ENCODE measurements at regions of chr5 and their contacts with region 1.

Region 1: DNA sequence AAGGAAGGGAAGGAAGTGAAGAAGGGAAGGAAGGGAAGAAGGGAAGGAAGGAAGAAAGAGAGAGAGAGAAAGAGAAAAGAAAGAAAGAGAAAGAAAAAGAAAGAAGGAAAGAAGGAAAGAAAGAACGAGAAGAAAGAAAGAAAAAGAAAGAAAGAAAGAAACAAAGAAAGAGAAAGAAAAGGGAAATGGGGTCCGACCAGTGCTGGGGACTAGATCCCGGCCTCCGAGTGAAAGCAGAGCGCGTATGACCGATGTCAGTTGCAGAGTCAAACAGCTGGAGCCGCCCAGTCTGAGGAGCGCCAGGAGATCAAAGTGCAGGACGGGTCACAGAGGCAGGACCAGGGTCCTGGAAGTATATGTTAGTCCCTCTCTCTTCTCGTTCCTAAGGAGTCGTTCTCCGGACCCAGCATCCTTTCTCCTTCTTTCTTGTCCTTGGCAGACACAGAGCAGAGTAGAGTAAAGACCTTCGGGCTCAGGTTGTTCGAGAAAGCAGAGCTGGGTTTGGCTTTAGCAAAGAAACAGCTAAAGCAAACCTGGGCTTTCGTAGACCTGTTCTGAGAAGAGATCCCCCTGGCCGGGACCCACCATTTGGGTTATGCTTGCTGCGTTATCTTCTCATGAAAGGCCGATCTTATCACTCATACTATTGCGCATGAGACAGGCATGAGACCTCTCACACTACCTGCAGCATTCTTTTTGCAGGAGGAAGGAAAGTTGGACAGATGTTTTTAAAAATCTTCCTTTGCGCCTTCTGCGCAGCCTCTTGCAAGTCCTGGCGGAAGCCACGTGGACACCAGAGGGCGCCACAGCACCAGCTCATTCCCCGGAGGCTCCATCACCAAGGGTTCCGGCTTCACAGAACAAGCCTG is 305.2 kb upstream of the MSX2 start:
- DNase-seq: peak; percentile 96
- H3K4me3 Mint-ChIP-seq: peak overlapping the region; percentile 68
- H3K27ac Mint-ChIP-seq: peak overlapping the region; percentile 22
- H3K4me1 Mint-ChIP-seq: peaks cover 25% of the 10 kb centered on the region
- H3K27me3 Mint-ChIP-seq: no peaks in the 10 kb centered on the region
- CTCF ChIP-seq: peak; percentile 97

Region 2: DNA sequence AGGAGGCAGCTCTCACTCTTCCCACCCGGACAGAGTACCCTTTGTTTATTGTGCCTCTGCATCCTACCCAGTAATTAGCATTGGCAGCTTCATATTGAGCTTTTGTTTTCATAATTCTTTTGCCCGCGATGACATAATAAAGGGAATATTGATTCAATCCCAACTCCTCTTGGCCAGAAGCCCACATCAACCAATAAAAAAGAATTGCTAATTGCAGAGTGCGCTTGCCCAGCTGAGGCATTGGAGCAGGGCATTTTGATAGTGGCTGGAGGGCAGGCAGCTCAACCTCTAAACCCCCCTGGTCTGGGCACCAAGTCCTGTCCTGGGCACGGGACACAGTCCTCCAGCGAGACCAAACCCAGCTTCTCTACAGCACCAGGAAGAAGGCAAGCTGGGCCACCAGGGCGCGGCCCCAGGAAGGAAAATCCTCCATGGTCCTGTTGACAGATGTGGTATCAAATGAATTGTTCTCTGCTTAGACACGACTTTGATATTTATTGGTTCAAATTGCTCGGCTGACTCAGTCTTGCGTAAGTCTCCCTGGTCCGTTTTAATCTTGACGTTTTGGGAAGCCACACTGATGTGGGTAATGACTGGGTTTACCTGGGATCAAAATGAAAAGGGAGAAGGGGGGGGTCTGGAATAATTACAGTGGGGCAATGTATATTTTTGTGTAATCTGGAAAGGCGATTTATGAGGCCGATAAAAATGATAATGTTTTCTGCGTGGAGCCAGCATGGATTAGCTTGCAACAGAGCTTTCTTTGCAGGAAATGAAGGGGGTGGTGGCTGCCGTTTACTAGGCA is 84.5 kb after region 1 on chr5:
- CTCF ChIA-PET with region 1: interaction called, 14 read pairs
- intact Hi-C with region 1: no loop called
- DNase-seq: peak; percentile 82
- H3K4me3 Mint-ChIP-seq: peak overlapping the region; percentile 65
- H3K27ac Mint-ChIP-seq: peak overlapping the region; percentile 79
- H3K4me1 Mint-ChIP-seq: peaks cover 54% of the 10 kb centered on the region
- H3K27me3 Mint-ChIP-seq: no peaks in the 10 kb centered on the region
- CTCF ChIP-seq: no peak

Region 3: DNA sequence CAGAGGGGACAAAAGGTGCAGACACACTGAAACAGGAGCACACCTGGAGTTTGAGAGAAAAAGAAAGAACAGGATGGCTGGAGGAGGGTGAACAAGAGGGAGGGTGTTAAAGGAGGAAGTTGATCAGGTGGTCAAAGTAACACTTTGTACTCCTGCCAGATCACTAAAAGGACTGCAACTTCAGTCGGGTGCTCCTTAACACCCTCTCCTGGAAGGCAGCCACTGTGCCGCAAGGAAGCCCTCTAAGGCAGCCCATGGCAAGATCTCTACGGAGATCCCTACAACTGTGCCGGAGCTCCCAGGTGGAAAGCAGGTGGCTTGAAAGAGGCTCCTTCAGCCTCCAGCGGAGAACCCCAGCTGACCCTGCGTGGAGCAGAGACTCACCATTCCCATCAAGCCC is 180.8 kb after region 1 on chr5:
- CTCF ChIA-PET with region 1: interaction called, 5 read pairs
- intact Hi-C with region 1: loop called (anchors 1 kb)
- DNase-seq: peak; percentile 55
- H3K4me3 Mint-ChIP-seq: peak overlapping the region; percentile 61
- H3K27ac Mint-ChIP-seq: peak overlapping the region; percentile 91
- H3K4me1 Mint-ChIP-seq: peaks cover 43% of the 10 kb centered on the region
- H3K27me3 Mint-ChIP-seq: no peaks in the 10 kb centered on the region
- CTCF ChIP-seq: no peak

Region 4: GRCh38 chr5:174735498-174736330 is 316.6 kb after region 1 on chr5:
- CTCF ChIA-PET with region 1: interaction called, 21 read pairs
- intact Hi-C with region 1: loop called (anchors 1 kb)
- DNase-seq: peak; percentile 83
- H3K4me3 Mint-ChIP-seq: peak overlapping the region; percentile 84
- H3K27ac Mint-ChIP-seq: no peak overlapping the region
- H3K4me1 Mint-ChIP-seq: peaks cover 14% of the 10 kb centered on the region
- H3K27me3 Mint-ChIP-seq: peaks cover 27% of the 10 kb centered on the region
- CTCF ChIP-seq: peak; percentile 68

Region 5: DNA sequence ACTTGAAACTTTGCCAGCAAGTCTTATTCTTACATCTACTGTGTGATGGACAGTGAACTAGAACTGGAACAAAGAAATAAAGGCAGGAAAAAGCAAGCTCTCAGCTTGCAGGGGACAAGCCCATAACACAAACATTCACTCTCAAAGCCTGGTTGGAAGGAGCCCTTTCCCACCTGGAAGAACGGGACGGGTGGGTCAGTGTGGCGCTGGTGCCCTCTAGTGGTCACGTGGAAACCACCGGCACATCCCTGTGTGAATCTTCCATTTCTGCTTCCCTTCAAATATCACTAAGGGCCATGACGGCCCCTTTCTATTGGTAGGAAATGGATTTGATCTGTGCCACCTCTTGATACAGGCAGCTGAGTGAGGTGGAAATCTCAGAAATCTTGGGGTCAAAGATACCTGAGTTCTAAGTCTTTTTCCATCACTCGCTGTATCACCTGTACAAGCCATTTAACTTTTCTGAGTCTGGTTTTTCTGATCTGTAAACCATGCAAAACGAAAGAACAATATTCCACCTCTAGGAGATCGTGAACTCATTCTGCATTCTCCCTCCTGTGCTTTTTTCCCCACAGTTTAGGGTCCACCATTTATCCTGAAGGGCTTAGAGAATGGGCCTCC is 516.8 kb after region 1 on chr5:
- CTCF ChIA-PET with region 1: no interaction called
- intact Hi-C with region 1: loop called (anchors 2 kb)
- DNase-seq: peak; percentile 82
- H3K4me3 Mint-ChIP-seq: no peak overlapping the region
- H3K27ac Mint-ChIP-seq: no peak overlapping the region
- H3K4me1 Mint-ChIP-seq: no peaks in the 10 kb centered on the region
- H3K27me3 Mint-ChIP-seq: peaks cover 37% of the 10 kb centered on the region
- CTCF ChIP-seq: peak; percentile 89

Measured in Calu3 (cell line).